HEK293T (cell line): ENCODE measurements at regions of chr1 and their contacts with region 1.

Region 1: DNA sequence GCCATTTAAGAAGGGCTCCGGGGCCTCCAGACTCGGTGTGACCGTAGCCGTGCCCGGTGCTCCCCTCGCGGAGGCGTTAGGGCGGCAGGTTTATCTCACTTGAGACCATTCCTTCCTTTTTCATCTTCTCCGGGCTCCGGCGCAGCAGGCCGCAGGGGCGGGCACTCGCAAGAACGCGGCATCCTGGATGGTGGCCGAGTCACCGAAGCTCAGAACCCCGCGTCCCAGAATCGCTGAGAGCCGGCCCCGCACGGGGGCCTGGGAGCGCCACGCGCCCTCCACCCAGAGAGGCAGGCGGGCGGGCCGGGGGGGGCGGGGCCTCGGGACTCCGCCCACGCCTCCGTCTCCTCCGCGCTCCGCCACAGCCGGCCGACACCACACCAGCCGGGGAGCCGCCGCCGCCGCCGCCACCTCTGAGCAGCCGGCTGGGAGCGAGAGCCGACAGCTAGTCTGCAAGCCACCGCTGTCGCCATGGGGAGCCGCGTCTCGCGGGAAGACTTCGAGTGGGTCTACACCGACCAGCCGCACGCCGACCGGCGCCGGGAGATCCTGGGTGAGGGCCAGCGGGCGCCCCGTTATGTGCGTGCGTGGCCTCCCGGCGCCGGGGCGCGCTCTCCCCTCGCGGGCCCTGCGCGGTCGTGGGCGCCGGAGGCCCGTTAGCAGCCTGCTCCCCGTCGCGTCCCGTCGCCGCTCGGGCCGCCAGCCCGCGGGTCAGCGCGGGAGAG is at the start of gene DEGS1:
- DNase-seq: peak; percentile 99

Region 2: GRCh38 chr1:224113918-224114786 is 68.9 kb before region 1 on chr1 and contains the start of gene FBXO28:
- CTCF ChIA-PET with region 1: no interaction called
- POLR2A ChIA-PET with region 1: no interaction called
- DNase-seq: peak; percentile 99

Region 3: DNA sequence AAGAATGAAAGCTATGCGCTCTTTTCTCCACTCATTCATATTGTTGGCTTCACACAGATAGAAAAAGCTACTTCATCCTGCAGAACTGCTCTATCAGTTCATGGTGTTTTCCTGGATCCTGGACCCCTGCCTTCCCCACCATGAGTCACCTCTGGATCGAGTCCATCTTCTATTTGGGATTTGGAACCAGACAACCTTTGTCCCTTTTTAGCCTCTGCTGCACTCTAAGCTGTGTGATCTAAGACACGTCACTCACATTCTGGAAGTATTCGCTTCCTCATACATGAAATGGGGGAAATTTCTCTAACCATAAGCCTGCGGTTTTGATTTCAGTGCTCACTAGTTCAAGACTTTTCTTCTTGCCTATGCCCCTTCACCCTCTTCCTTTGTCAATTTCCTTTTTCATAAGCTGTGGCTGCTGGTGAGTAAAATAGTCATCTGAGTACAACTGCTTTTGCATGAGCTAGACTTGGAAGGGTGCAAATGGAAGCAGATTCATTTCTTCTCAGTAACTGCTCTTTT is 14.1 kb before region 1 on chr1:
- CTCF ChIA-PET with region 1: no interaction called
- POLR2A ChIA-PET with region 1: interaction called, 11 read pairs
- DNase-seq: no peak

Region 4: GRCh38 chr1:224205438-224205840 is 22.4 kb after region 1 on chr1:
- CTCF ChIA-PET with region 1: interaction called, 4 read pairs
- POLR2A ChIA-PET with region 1: interaction called, 11 read pairs
- DNase-seq: no peak